PC-9 (cell line): ENCODE measurements at regions of chr19 and their contacts with region 1.

Region 1: GRCh38 chr19:10870955-10871603 is at the start of gene CARM1:
- DNase-seq: peak; percentile 90 to 99
- H3K4me3 ChIP-seq: peak within 1 kb of the TSS; percentile 85
- H3K27ac ChIP-seq: peak within 1 kb of the TSS; percentile 9; the same call in 1 of the 2 replicates
- H3K4me1 ChIP-seq: peaks cover 17% of the 10 kb centered on the region
- H3K27me3 ChIP-seq: no peaks in the 10 kb centered on the region
- CTCF ChIP-seq: peak; percentile 45; the same call in 1 of the 2 replicates
- total RNA-seq, gene CARM1: 56.0 and 63.7 TPM in 2 replicates

Region 2: GRCh38 chr19:10928525-10929401 is 57.7 kb after region 1 on chr19 and contains the starts of genes TIMM29 and YIPF2:
- CTCF ChIA-PET with region 1: no interaction called
- POLR2A ChIA-PET with region 1: interaction called, 4 read pairs
- intact Hi-C with region 1: loop called (anchors 1 kb)
- DNase-seq: peak; percentile 96 to 98
- H3K4me3 ChIP-seq: peak within 1 kb of the TSS; percentile 84
- H3K27ac ChIP-seq: no peak within 1 kb of the TSS
- H3K4me1 ChIP-seq: peaks cover 15% of the 10 kb centered on the region
- H3K27me3 ChIP-seq: no peaks in the 10 kb centered on the region
- CTCF ChIP-seq: no peak
- total RNA-seq, gene TIMM29: 22.4 and 26.2 TPM in 2 replicates
- total RNA-seq, gene YIPF2: 60.2 and 79.8 TPM in 2 replicates